Naive thymus-derived CD4-positive, alpha-beta T cell (primary cell): ENCODE measurements at regions of chr7 and their contacts with region 1.

Region 1: DNA sequence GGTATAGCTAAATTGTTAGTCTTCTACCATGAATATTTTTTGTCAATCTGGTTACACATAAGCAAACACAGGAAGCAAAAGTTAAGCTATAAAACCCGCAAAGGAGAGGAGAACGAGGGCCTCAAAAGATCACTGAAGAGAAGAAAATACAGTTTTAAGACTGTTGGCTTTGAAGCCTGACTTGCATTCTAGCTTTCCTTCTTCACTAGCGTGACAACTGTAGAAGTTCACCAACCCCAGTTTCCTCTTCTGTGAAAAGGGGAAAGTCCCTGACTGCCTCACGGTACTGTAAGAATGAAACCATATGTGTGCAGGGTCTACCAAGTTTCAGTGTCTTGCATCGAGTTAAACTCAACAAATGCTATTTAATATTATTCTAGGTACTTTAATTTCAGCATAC is 7.5 kb upstream of the LRRN3 start:
- DNase-seq: peak in 8 of 9 donors; percentile 52 to 90 (median 84)
- ATAC-seq: peak; percentile 99
- H3K4me3 ChIP-seq: peak overlapping the region; percentile 12
- H3K4me3 Mint-ChIP-seq: peak overlapping the region; percentile 37 to 80 (median 68)
- H3K27ac ChIP-seq: peak overlapping the region; percentile 70
- H3K27ac Mint-ChIP-seq: peak overlapping the region; percentile 74 to 93 (median 89)
- H3K4me1 ChIP-seq: peaks cover 30 to 49% of the 10 kb centered on the region in 2 donors
- H3K4me1 Mint-ChIP-seq: peaks cover 25 to 84% (median 74%) of the 10 kb centered on the region in 7 donors
- H3K27me3 ChIP-seq: no peaks in the 10 kb centered on the region
- H3K27me3 Mint-ChIP-seq: no peaks in the 10 kb centered on the region

Region 2: GRCh38 chr7:110909117-110909516 is 174.3 kb before region 1 on chr7:
- CTCF ChIA-PET with region 1: no interaction called
- POLR2A ChIA-PET with region 1: interaction called, 4 read pairs
- intact Hi-C with region 1: loop called (anchors 1 to 5 kb)
- DNase-seq: no peak
- ATAC-seq: no peak
- H3K4me3 ChIP-seq: no peak overlapping the region
- H3K4me3 Mint-ChIP-seq: peak overlapping the region in 1 of 10 donors; percentile 1
- H3K27ac ChIP-seq: no peak overlapping the region
- H3K27ac Mint-ChIP-seq: no peak overlapping the region
- H3K4me1 ChIP-seq: peaks cover 0 to 8% of the 10 kb centered on the region in 2 donors
- H3K4me1 Mint-ChIP-seq: peaks cover 0 to 50% (median 35%) of the 10 kb centered on the region in 7 donors
- H3K27me3 ChIP-seq: no peaks in the 10 kb centered on the region
- H3K27me3 Mint-ChIP-seq: no peaks in the 10 kb centered on the region

Region 3: GRCh38 chr7:110977127-110977737 is 106.2 kb before region 1 on chr7:
- CTCF ChIA-PET with region 1: interaction called, 4 read pairs
- POLR2A ChIA-PET with region 1: interaction called, 5 read pairs
- intact Hi-C with region 1: loop called in 1 of 2 experiments (anchors 1 kb)
- DNase-seq: peak in 6 of 9 donors; percentile 17 to 53 (median 43)
- ATAC-seq: peak; percentile 57
- H3K4me3 ChIP-seq: no peak overlapping the region
- H3K4me3 Mint-ChIP-seq: peak overlapping the region; percentile 18 to 83 (median 71)
- H3K27ac ChIP-seq: peak overlapping the region; percentile 51
- H3K27ac Mint-ChIP-seq: peak overlapping the region; percentile 63 to 95 (median 82)
- H3K4me1 ChIP-seq: peaks cover 10 to 20% of the 10 kb centered on the region in 2 donors
- H3K4me1 Mint-ChIP-seq: peaks cover 10 to 76% (median 54%) of the 10 kb centered on the region in 7 donors
- H3K27me3 ChIP-seq: no peaks in the 10 kb centered on the region
- H3K27me3 Mint-ChIP-seq: no peaks in the 10 kb centered on the region

Region 4: DNA sequence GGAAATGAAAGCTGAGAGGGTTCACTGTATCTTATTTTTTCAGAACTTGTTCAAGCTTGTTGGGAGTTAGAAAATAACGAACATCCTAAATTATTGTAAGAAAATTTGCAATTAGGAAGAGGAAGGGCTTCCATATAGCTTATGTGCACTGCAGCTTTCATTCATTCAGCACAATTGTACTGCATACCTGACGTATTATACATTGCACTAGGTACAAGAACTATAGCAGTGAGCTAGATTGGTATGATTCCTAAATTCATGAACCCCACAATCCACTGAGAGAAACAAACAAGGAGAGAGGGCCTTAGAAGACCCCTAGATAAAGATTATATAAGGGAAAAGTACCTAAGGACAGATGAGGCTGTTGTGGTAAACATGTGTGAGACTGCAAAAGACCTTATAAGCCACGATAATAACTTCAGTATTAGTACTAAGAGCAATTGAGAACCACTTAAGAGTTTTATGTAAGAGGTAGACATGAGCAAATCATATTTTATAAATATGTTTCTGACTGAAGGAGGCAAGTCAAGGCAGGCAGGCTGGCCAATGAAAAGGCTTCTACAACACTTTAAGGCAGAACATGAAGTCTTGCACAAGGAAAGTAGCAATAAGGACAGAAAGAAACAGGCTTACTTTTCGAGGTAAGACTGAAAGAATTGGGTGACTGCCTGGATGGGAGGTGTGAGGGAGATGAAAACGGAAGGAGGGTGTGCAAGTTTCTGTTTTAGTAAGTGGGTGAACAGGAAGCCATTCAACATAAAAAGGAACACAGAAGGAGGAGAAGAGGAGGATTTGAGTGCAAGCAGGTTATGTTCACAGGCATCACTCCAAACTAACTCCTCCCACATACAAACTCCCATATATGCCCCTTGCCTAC is 70.4 kb before region 1 on chr7:
- CTCF ChIA-PET with region 1: interaction called, 5 read pairs
- POLR2A ChIA-PET with region 1: interaction called, 37 read pairs
- intact Hi-C with region 1: loop called (anchors 1 kb)
- DNase-seq: peak in 8 of 9 donors; percentile 44 to 76 (median 70)
- ATAC-seq: peak; percentile 86
- H3K4me3 ChIP-seq: peak overlapping the region; percentile 50
- H3K4me3 Mint-ChIP-seq: peak overlapping the region in 9 of 10 donors; percentile 59 to 83 (median 76)
- H3K27ac ChIP-seq: peak overlapping the region; percentile 82
- H3K27ac Mint-ChIP-seq: peak overlapping the region in 6 of 9 donors; percentile 84 to 96 (median 90)
- H3K4me1 ChIP-seq: peaks cover 13 to 77% of the 10 kb centered on the region in 2 donors
- H3K4me1 Mint-ChIP-seq: peaks cover 38 to 76% (median 48%) of the 10 kb centered on the region in 7 donors
- H3K27me3 ChIP-seq: no peaks in the 10 kb centered on the region
- H3K27me3 Mint-ChIP-seq: no peaks in the 10 kb centered on the region

Region 5: DNA sequence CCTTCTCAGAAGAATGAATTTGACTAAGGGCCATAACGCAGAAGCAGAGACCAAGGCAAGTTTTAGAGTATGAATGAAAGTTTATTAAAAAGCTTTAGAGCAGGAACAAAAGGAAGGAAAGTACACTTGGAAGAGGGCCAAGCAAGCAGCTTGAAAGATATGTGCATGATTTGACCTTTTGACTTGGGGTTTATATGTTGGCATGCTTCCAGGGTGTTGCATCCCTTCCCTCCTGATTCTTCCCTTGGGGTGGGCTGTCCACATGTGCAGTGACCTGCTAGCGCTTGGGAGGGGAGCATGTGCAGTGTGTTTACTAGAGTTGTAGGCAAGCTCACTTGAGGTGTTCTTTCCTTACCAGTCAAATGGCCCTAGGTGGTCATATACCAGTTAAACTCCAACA is 30.4 kb before region 1 on chr7:
- CTCF ChIA-PET with region 1: interaction called, 4 read pairs
- POLR2A ChIA-PET with region 1: no interaction called
- intact Hi-C with region 1: loop called in 1 of 2 experiments (anchors 1 kb)
- DNase-seq: no peak
- ATAC-seq: no peak
- H3K4me3 ChIP-seq: no peak overlapping the region
- H3K4me3 Mint-ChIP-seq: peak overlapping the region in 2 of 10 donors; percentile 19 to 31
- H3K27ac ChIP-seq: no peak overlapping the region
- H3K27ac Mint-ChIP-seq: peak overlapping the region in 2 of 9 donors; percentile 47
- H3K4me1 ChIP-seq: peaks cover 0 to 10% of the 10 kb centered on the region in 2 donors
- H3K4me1 Mint-ChIP-seq: peaks cover 7 to 60% (median 37%) of the 10 kb centered on the region in 7 donors
- H3K27me3 ChIP-seq: no peaks in the 10 kb centered on the region
- H3K27me3 Mint-ChIP-seq: no peaks in the 10 kb centered on the region